ENCODE measurements at regions of chr1 and their contacts with region 1.

Region 1: GRCh38 chr1:8137481-8138244 is 111.6 kb upstream of the ERRFI1 start:
- DNase-seq: peak in 1 of 2 donors; percentile 44
- ATAC-seq: peak; percentile 32 to 75 (median 58)
- H3K4me3 ChIP-seq: peak overlapping the region in 1 of 10 donors; percentile 7
- H3K27ac ChIP-seq: peak overlapping the region; percentile 21 to 79 (median 53)
- H3K4me1 ChIP-seq: peaks cover 0 to 51% (median 30%) of the 10 kb centered on the region in 9 donors
- H3K27me3 ChIP-seq: peaks cover 0 to 6% (median 0%) of the 10 kb centered on the region in 7 donors
- CTCF ChIP-seq: no peak

Region 2: GRCh38 chr1:8040586-8040985 is 97.1 kb before region 1 on chr1:
- intact Hi-C with region 1: loop called in 1 of 10 experiments (anchors 10 kb)
- DNase-seq: peak; percentile 23 to 78
- ATAC-seq: peak; percentile 34 to 84 (median 68)
- H3K4me3 ChIP-seq: no peak overlapping the region
- H3K27ac ChIP-seq: peak overlapping the region in 5 of 10 donors; percentile 0 to 69 (median 31)
- H3K4me1 ChIP-seq: peaks cover 0 to 13% (median 0%) of the 10 kb centered on the region in 9 donors
- H3K27me3 ChIP-seq: no peaks in the 10 kb centered on the region
- CTCF ChIP-seq: no peak

Region 3: GRCh38 chr1:8077120-8077573 is 60.5 kb before region 1 on chr1:
- intact Hi-C with region 1: loop called in 2 of 10 experiments (anchors 5 to 10 kb)
- DNase-seq: peak; percentile 45 to 78
- ATAC-seq: peak; percentile 92 to 97 (median 94)
- H3K4me3 ChIP-seq: peak overlapping the region in 1 of 10 donors; percentile 5
- H3K27ac ChIP-seq: peak overlapping the region in 9 of 10 donors; percentile 5 to 79 (median 66)
- H3K4me1 ChIP-seq: peaks cover 0 to 40% (median 23%) of the 10 kb centered on the region in 9 donors
- H3K27me3 ChIP-seq: no peaks in the 10 kb centered on the region
- CTCF ChIP-seq: peak in 2 of 9 donors; percentile 3 to 16

Region 4: DNA sequence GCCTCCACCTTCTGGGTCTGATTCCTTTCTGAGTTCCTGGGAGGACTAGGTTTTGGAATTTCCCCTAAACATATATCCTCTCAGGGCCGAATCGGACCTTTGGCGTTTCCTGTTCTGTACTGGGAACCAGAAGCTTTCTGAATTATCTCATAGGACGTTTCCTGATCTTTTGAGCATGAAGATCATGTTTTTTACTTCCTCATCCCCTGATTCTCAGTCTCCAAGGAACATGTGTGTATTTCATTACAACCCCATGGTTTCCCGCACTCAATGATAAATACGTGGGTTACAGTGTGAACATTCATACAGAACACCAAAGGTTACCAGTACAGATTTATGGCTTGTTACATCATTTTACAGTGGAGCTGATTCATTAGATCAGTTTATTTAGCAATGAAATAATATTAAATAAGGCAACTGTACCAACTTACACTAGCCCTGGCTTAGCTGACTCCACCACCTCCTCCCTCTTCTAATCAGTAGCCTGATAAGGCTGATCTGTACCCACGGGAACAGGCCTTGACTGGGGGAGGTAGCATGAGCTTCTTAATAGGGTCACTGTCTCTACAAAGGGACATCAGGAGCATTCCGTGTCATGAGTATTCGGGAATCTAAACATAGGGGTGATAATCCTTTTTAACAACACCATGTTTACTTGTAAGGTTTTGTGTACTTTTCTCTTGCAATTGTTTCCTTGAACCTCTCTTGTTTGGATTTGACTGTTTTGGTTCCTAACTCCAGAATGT is 53.8 kb before region 1 on chr1:
- intact Hi-C with region 1: loop called in 2 of 10 experiments (anchors 5 to 10 kb)
- DNase-seq: peak in 1 of 2 donors; percentile 19
- ATAC-seq: peak in 7 of 8 donors; percentile 41 to 74 (median 59)
- H3K4me3 ChIP-seq: no peak overlapping the region
- H3K27ac ChIP-seq: peak overlapping the region in 9 of 10 donors; percentile 9 to 86 (median 63)
- H3K4me1 ChIP-seq: peaks cover 0 to 34% (median 23%) of the 10 kb centered on the region in 9 donors
- H3K27me3 ChIP-seq: no peaks in the 10 kb centered on the region
- CTCF ChIP-seq: no peak

Region 5: GRCh38 chr1:8211589-8212442 is 74.2 kb after region 1 on chr1:
- intact Hi-C with region 1: loop called in 1 of 10 experiments (anchors 10 kb)
- DNase-seq: no peak
- ATAC-seq: peak; percentile 23 to 80 (median 50)
- H3K4me3 ChIP-seq: peak overlapping the region in 1 of 10 donors; percentile 7
- H3K27ac ChIP-seq: peak overlapping the region in 1 of 10 donors; percentile 90
- H3K4me1 ChIP-seq: peaks cover 0 to 64% (median 17%) of the 10 kb centered on the region in 9 donors
- H3K27me3 ChIP-seq: peaks cover 0 to 14% (median 5%) of the 10 kb centered on the region in 7 donors
- CTCF ChIP-seq: no peak

Region 6: DNA sequence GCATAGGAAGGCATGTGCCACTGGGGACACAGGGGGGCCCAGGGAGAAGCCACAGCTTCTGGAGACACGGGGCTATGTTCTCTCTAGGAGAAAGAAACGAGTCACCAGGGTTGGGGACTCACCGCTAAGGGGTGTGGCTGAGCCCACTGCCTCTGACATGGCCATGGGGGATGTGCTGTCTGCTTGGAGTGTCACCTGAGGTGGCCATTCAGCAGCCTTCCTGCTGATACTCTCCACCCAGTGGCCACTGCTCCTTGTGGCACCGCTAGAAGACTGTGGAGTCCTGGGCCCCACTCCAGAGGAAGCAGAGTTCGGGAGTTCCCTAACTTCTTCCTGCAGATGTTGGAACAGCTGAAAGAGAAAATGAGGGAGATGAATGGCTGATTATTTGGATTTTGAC is 89.1 kb after region 1 on chr1:
- intact Hi-C with region 1: loop called in 1 of 10 experiments (anchors 1 kb)
- DNase-seq: no peak
- ATAC-seq: no peak
- H3K4me3 ChIP-seq: no peak overlapping the region
- H3K27ac ChIP-seq: peak overlapping the region in 1 of 10 donors; percentile 31
- H3K4me1 ChIP-seq: peaks cover 0 to 21% (median 0%) of the 10 kb centered on the region in 9 donors
- H3K27me3 ChIP-seq: peaks cover 0 to 4% (median 0%) of the 10 kb centered on the region in 7 donors
- CTCF ChIP-seq: no peak